ENCODE measurements at regions of chr4 and their contacts with region 1.

Region 1: DNA sequence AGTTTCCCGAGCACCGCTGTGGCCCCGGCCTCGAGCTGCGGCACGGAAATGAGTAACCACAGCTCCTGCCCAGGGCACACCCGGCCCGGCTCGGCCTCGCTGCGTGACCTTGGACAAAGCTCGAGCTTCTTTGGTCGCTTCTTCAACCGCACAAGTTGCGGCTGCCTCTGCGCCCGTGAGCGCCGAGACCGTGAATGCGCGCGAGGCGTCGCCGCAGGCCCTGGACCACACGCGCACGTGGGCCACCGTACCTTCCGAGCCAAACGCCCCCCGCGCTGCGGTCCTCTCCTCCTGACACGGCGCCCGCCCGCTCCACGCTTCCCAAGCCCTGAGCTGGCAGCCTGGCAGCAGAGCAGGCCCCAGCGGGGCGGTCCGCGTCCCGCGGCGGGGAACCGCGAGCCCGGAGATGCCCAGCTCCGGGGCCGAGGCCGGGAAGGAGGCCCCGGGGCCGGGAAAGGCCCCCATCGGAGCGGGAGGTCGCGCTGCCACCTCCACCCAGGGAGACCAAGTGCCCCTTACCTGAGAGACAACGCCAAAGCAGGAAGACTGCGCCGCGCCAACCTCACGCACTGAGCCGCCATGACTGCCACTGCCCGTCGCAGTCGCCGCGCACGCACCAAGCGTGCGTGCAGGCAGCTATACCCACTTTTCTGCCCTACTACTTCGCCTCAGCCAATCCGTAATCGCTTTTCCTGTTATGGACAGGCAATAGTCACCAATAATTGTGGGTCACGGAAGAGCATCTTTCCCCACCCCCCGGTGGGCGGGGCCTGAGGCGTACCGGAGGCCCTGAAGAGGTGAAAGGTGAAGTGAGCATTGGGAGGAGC is at the start of gene GRPEL1:
- DNase-seq: peak; percentile 100
- H3K4me3 ChIP-seq: peak within 1 kb of the TSS; percentile 82
- H3K4me3 Mint-ChIP-seq: peak within 1 kb of the TSS; percentile 91 to 96 (median 94)
- H3K27ac ChIP-seq: peak within 1 kb of the TSS; percentile 87
- H3K27ac Mint-ChIP-seq: peak within 1 kb of the TSS; percentile 75 to 99 (median 94)
- H3K4me1 ChIP-seq: peaks cover 34% of the 10 kb centered on the region
- H3K4me1 Mint-ChIP-seq: peaks cover 39 to 63% (median 57%) of the 10 kb centered on the region in 3 donors
- H3K27me3 ChIP-seq: no peaks in the 10 kb centered on the region
- H3K27me3 Mint-ChIP-seq: peaks cover 0 to 7% of the 10 kb centered on the region in 2 donors
- total RNA-seq, gene GRPEL1: 94.0 to 94.5 TPM

Region 2: GRCh38 chr4:6716018-6716911 is 351.4 kb before region 1 on chr4 and contains the start of gene BLOC1S4:
- CTCF ChIA-PET with region 1: interaction called, 87 read pairs
- POLR2A ChIA-PET with region 1: interaction called, 8 read pairs
- DNase-seq: peak; percentile 83 to 94 (median 92)
- H3K4me3 ChIP-seq: peak within 1 kb of the TSS; percentile 78
- H3K4me3 Mint-ChIP-seq: peak within 1 kb of the TSS; percentile 93 to 97 (median 96)
- H3K27ac ChIP-seq: peak within 1 kb of the TSS; percentile 80
- H3K27ac Mint-ChIP-seq: peak within 1 kb of the TSS; percentile 92 to 98 (median 96)
- H3K4me1 ChIP-seq: peaks cover 34% of the 10 kb centered on the region
- H3K4me1 Mint-ChIP-seq: peaks cover 29 to 48% (median 48%) of the 10 kb centered on the region in 3 donors
- H3K27me3 ChIP-seq: no peaks in the 10 kb centered on the region
- H3K27me3 Mint-ChIP-seq: no peaks in the 10 kb centered on the region
- total RNA-seq, gene BLOC1S4: 21.5 to 22.9 TPM

Region 3: GRCh38 chr4:6974138-6974848 is 93.4 kb before region 1 on chr4:
- CTCF ChIA-PET with region 1: interaction called, 17 read pairs
- POLR2A ChIA-PET with region 1: no interaction called
- DNase-seq: peak; percentile 63 to 85 (median 76)
- H3K4me3 ChIP-seq: no peak overlapping the region
- H3K4me3 Mint-ChIP-seq: no peak overlapping the region
- H3K27ac ChIP-seq: no peak overlapping the region
- H3K27ac Mint-ChIP-seq: peak overlapping the region; percentile 7 to 91 (median 62)
- H3K4me1 ChIP-seq: peaks cover 9% of the 10 kb centered on the region
- H3K4me1 Mint-ChIP-seq: peaks cover 19 to 27% (median 24%) of the 10 kb centered on the region in 3 donors
- H3K27me3 ChIP-seq: no peaks in the 10 kb centered on the region
- H3K27me3 Mint-ChIP-seq: no peaks in the 10 kb centered on the region

Region 4: GRCh38 chr4:6986781-6987587 is 80.7 kb before region 1 on chr4:
- CTCF ChIA-PET with region 1: interaction called, 14 read pairs
- POLR2A ChIA-PET with region 1: interaction called, 17 read pairs
- DNase-seq: peak; percentile 89 to 94 (median 90)
- H3K4me3 ChIP-seq: peak overlapping the region; percentile 84
- H3K4me3 Mint-ChIP-seq: peak overlapping the region; percentile 93 to 97 (median 96)
- H3K27ac ChIP-seq: peak overlapping the region; percentile 83
- H3K27ac Mint-ChIP-seq: peak overlapping the region; percentile 84 to 99 (median 97)
- H3K4me1 ChIP-seq: peaks cover 47% of the 10 kb centered on the region
- H3K4me1 Mint-ChIP-seq: peaks cover 66 to 92% (median 85%) of the 10 kb centered on the region in 3 donors
- H3K27me3 ChIP-seq: no peaks in the 10 kb centered on the region
- H3K27me3 Mint-ChIP-seq: no peaks in the 10 kb centered on the region

Region 5: DNA sequence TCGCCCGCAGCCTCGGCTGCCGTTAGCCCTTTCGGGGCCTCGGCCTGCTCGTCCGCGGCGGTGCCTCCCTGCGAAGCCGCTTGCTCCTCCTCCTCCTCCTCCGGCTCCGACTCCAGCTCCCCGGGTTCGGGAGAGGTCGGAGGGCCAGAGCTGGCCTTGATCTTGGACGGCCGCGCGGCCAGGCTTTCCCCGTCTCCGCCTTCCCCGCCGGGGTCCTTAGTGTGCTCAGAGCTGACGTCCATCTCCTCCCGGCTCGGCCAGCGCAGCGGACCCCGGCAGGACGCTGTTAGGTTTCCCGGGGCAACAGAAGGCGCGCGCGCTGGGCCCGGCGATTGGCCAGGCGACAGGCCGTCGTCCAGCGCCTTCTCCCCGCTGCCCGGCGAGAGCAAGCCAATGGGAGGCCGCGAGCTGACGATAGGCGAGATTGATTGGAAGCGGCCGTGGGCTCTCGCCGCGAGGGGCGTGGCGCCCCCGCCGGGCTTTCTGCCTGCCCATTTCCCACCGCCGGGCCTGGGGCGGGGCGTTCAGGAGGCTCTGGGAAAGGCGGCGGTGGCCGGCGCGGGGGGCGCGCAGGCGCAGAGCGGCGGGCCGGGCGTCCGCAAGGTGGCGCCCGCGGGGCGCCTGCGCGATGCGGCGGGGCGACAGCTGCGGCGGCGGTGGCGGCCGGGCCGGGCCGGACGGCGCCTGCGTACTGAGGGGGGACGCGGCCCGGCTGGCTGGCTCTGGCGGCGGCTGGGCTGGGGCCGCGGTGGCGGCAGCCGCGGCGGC is 24.8 kb before region 1 on chr4 and contains the start of gene TADA2B:
- CTCF ChIA-PET with region 1: interaction called, 131 read pairs
- POLR2A ChIA-PET with region 1: interaction called, 82 read pairs
- DNase-seq: peak; percentile 85 to 93 (median 91)
- H3K4me3 ChIP-seq: peak within 1 kb of the TSS; percentile 81
- H3K4me3 Mint-ChIP-seq: peak within 1 kb of the TSS; percentile 90 to 99 (median 93)
- H3K27ac ChIP-seq: peak within 1 kb of the TSS; percentile 82
- H3K27ac Mint-ChIP-seq: peak within 1 kb of the TSS; percentile 84 to 96 (median 88)
- H3K4me1 ChIP-seq: peaks cover 40% of the 10 kb centered on the region
- H3K4me1 Mint-ChIP-seq: peaks cover 41 to 53% (median 41%) of the 10 kb centered on the region in 3 donors
- H3K27me3 ChIP-seq: no peaks in the 10 kb centered on the region
- H3K27me3 Mint-ChIP-seq: no peaks in the 10 kb centered on the region
- total RNA-seq, gene TADA2B: 15.8 to 16.0 TPM

Region 6: GRCh38 chr4:7055111-7055989 is 12.3 kb before region 1 on chr4:
- CTCF ChIA-PET with region 1: interaction called, 30 read pairs
- POLR2A ChIA-PET with region 1: interaction called, 10 read pairs
- DNase-seq: peak in 1 of 5 donors; percentile 14
- H3K4me3 ChIP-seq: no peak overlapping the region
- H3K4me3 Mint-ChIP-seq: no peak overlapping the region
- H3K27ac ChIP-seq: no peak overlapping the region
- H3K27ac Mint-ChIP-seq: peak overlapping the region in 2 of 8 donors; percentile 18 to 80
- H3K4me1 ChIP-seq: peaks cover 10% of the 10 kb centered on the region
- H3K4me1 Mint-ChIP-seq: peaks cover 5 to 32% (median 20%) of the 10 kb centered on the region in 3 donors
- H3K27me3 ChIP-seq: no peaks in the 10 kb centered on the region
- H3K27me3 Mint-ChIP-seq: peaks cover 0 to 1% of the 10 kb centered on the region in 2 donors

Measured in CD8-positive, alpha-beta memory T cell (primary cell).